OCI-LY7 (cell line): ENCODE measurements at regions of chr2 and their contacts with region 1.

Region 1: DNA sequence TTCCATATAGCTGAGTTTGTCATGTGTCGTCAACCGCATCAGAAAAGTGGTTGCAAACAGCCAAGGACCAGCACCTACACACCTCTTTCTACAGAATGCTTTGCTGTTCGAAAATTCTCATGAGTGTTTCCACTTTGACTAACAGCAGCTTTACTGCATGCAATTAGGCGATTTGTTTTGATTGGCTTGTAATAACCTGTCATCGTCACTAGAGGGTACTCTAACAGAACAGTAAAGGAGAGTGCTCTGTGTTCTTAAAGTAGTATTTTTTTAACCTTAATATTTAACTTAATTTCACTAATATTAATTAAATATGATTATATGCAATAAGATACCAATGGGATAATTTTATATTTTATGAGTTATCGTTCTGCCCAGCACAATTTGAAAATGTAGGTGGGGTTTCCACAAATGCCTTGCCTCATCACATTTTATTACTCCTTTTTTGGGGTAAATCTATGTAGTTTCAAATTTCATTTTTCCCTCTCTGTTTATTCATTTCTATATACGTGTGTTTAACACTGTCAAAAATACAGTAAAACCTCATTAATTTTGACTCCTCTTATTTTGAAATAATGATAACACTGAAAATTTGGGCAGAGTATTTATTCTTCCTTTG is 502.2 kb downstream of the NRXN1 start:
- DNase-seq: peak; percentile 51
- H3K4me3 ChIP-seq: no peak overlapping the region
- H3K27ac ChIP-seq: no peak overlapping the region
- H3K4me1 ChIP-seq: no peaks in the 10 kb centered on the region
- CTCF ChIP-seq: peak; percentile 80

Region 2: GRCh38 chr2:50606860-50607259 is 77.2 kb after region 1 on chr2:
- CTCF ChIA-PET with region 1: no interaction called
- POLR2A ChIA-PET with region 1: no interaction called
- intact Hi-C with region 1: no loop called
- DNase-seq: no peak
- H3K4me3 ChIP-seq: no peak overlapping the region
- H3K27ac ChIP-seq: no peak overlapping the region
- H3K4me1 ChIP-seq: no peaks in the 10 kb centered on the region
- CTCF ChIP-seq: 0 out of 2 replicates have a peak, but pooled peaks have one; percentile 28

Region 3: DNA sequence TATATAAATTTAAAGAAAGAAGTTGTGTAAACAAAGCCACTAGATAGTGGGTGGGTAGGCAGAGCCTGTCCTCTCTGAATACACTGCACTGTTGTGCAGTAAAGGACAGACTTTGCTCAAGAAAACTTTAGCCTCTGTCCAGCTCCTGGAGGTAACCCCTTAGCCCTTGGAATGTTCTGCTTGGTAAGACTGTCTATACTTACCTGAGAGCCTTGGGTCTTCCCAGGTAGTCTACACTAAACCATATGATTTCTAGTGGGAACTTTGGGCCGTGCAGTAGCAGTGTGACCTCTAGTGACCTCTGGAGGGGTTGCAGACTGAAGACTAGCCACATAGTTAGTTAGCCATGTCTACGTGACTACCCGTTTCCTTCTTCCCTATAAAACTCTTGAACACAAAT is 1180.5 kb after region 1 on chr2:
- CTCF ChIA-PET with region 1: no interaction called
- POLR2A ChIA-PET with region 1: no interaction called
- intact Hi-C with region 1: loop called (anchors 10 kb)
- DNase-seq: peak; percentile 20
- H3K4me3 ChIP-seq: no peak overlapping the region
- H3K27ac ChIP-seq: no peak overlapping the region
- H3K4me1 ChIP-seq: no peaks in the 10 kb centered on the region
- CTCF ChIP-seq: peak; percentile 74